Calu3 (cell line): ENCODE measurements at regions of chr20 and their contacts with region 1.

Region 1: GRCh38 chr20:17536944-17537444 is 5.8 kb upstream of the BFSP1 start:
- DNase-seq: peak; percentile 51
- H3K4me3 Mint-ChIP-seq: no peak overlapping the region
- H3K27ac Mint-ChIP-seq: no peak overlapping the region
- H3K4me1 Mint-ChIP-seq: no peaks in the 10 kb centered on the region
- H3K27me3 Mint-ChIP-seq: no peaks in the 10 kb centered on the region
- CTCF ChIP-seq: peak; percentile 60

Region 2: DNA sequence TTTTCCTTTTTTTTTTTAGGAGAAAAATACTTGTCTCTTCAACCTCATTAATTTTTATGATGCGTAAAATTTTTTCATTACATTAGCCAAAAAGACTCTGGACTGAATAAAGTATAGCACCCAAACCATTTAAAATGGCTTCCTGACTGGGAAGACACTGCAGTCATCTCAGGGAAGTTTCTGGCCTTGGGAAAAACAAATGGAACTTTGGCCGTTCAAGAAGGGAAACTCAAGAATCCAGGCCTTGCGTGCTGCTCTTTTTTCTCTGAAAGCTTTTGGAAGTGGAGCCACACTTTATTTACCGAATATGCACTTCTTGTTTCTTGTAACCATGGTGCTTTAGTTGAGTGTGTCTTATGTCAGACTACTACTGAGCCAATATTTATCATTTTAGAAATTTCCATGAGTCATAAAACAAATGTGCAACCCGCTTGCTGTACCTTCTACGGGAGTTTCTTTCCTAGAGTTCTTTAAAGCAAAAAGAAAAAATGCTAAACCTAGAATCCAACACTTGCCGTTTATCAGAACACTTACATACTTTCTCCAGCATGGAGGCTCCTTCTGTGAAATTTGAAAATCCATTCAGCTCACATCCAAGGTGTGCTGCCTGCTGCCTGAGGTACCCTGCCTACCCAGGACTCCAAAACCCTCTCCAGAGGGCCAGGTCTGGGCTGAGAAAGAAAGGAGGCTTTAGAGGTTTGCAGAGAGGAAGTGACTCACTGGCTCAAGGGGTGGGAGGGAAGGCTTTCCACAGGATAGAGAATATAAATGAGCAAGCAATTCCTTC is 21.4 kb after region 1 on chr20:
- CTCF ChIA-PET with region 1: interaction called, 4 read pairs
- intact Hi-C with region 1: loop called (anchors 1 kb)
- DNase-seq: peak; percentile 48
- H3K4me3 Mint-ChIP-seq: peak overlapping the region; percentile 39
- H3K27ac Mint-ChIP-seq: peak overlapping the region; percentile 80
- H3K4me1 Mint-ChIP-seq: peaks cover 9% of the 10 kb centered on the region
- H3K27me3 Mint-ChIP-seq: no peaks in the 10 kb centered on the region
- CTCF ChIP-seq: no peak

Region 3: GRCh38 chr20:17569616-17570346 is 32.8 kb after region 1 on chr20 and contains the start of gene DSTN:
- CTCF ChIA-PET with region 1: interaction called, 5 read pairs
- intact Hi-C with region 1: loop called (anchors 5 kb)
- DNase-seq: peak; percentile 83
- H3K4me3 Mint-ChIP-seq: peak within 1 kb of the TSS; percentile 87
- H3K27ac Mint-ChIP-seq: peak within 1 kb of the TSS; percentile 77
- H3K4me1 Mint-ChIP-seq: peaks cover 8% of the 10 kb centered on the region
- H3K27me3 Mint-ChIP-seq: no peaks in the 10 kb centered on the region
- CTCF ChIP-seq: no peak
- total RNA-seq, gene DSTN: 90.0 and 110 TPM in 2 replicates

Region 4: DNA sequence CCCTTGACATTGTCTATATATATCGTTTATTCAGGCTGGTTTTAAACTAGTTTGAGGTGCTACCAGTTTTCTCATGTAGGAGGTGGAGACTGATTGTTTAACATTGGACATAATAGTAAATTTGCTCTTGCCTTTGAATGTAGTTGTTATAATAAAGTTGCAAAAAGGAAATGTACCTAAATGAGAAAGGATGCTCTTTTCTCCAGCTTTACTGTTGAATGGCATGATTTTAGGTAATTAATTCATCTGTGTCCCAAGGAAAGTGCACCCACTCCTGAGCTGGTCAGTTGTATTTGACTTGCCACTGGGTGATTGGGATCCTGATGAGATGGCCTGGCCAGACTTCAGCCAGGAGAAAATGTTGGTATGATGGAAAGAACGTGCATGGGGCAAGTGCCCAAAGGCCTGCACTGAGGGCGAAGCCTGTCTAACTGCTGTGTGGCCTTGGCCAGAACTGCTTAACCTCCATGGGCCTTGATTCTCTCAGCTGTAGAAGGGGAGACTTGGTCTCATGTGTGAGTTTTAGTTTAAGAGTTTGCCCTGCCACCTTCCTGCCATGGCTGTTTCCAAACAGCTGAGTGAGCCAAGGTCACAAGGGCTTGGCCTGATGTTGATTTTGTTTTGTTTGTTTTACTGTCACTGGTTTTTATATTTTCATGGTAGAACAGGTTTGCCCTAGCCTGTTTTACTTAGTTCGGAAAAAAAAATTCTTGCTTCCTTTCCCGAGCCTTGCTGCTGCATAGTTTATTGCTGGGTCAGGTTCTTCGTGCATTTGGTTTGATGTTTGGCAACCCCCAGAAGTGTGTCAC is 68.1 kb after region 1 on chr20:
- CTCF ChIA-PET with region 1: no interaction called
- intact Hi-C with region 1: loop called (anchors 5 kb)
- DNase-seq: no peak
- H3K4me3 Mint-ChIP-seq: no peak overlapping the region
- H3K27ac Mint-ChIP-seq: no peak overlapping the region
- H3K4me1 Mint-ChIP-seq: peaks cover 7% of the 10 kb centered on the region
- H3K27me3 Mint-ChIP-seq: no peaks in the 10 kb centered on the region
- CTCF ChIP-seq: no peak

Region 5: DNA sequence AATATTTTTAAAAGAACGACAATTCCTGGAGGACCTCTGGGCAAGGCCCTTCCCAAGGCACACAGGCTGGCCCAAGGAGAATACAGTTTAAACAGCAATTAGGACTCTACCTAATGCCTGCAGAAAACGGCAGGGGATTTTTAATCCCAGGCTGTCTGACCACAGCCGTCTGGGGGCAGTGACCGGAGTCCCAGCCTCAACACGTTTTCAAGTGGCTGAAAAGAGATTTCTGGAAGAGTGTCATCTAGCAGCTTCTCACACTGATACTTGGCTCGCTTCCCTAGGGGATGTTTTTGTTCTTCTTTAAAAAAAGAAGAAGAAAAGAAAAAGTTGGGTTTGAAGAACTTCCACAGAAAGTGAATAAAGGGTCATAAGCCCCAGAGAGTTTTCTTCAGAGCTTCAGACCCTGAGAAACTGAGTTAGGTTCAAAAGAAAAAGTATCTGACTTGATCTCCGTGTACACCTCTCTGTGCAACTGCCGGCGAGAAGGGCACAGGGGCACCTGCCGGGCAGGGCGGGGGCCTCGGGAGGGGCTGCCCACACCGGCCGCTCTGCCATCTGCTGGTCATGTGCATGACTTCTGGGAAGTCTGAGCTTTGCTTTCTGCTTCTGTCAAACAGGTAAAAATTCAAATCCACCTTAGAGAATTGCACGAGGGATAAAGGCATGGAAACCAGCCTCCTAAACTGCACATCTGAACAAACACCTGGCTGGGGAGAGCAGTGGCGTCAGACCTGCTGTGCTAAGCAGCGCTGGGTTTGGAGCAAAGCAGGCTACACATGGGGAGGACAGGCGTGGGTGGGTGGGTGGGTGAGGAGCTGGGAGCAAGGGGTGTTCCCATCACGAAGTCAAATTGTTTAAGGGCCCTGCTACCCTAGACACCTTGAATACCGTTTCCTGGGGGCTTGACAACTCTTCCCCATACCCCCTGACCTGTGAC is 112.1 kb after region 1 on chr20:
- CTCF ChIA-PET with region 1: no interaction called
- intact Hi-C with region 1: no loop called
- DNase-seq: peak; percentile 30
- H3K4me3 Mint-ChIP-seq: no peak overlapping the region
- H3K27ac Mint-ChIP-seq: no peak overlapping the region
- H3K4me1 Mint-ChIP-seq: no peaks in the 10 kb centered on the region
- H3K27me3 Mint-ChIP-seq: no peaks in the 10 kb centered on the region
- CTCF ChIP-seq: no peak